Activated naive CD4-positive, alpha-beta T cell treated with anti-CD3 and anti-CD28 coated beads for 36 hours (primary cell): ENCODE measurements at regions of chr20 and their contacts with region 1.

Region 1: GRCh38 chr20:32031007-32031958 is 20.8 kb upstream of the HCK start:
- DNase-seq: peak; percentile 77
- H3K4me3 Mint-ChIP-seq: peak overlapping the region; percentile 12
- H3K27ac Mint-ChIP-seq: no peak overlapping the region
- H3K4me1 Mint-ChIP-seq: no peaks in the 10 kb centered on the region
- H3K27me3 Mint-ChIP-seq: peaks cover 6% of the 10 kb centered on the region

Region 2: GRCh38 chr20:31751126-31751525 is 280.2 kb before region 1 on chr20:
- CTCF ChIA-PET with region 1: no interaction called
- intact Hi-C with region 1: no loop called
- DNase-seq: no peak
- H3K4me3 Mint-ChIP-seq: no peak overlapping the region
- H3K27ac Mint-ChIP-seq: no peak overlapping the region
- H3K4me1 Mint-ChIP-seq: no peaks in the 10 kb centered on the region
- H3K27me3 Mint-ChIP-seq: no peaks in the 10 kb centered on the region

Region 3: DNA sequence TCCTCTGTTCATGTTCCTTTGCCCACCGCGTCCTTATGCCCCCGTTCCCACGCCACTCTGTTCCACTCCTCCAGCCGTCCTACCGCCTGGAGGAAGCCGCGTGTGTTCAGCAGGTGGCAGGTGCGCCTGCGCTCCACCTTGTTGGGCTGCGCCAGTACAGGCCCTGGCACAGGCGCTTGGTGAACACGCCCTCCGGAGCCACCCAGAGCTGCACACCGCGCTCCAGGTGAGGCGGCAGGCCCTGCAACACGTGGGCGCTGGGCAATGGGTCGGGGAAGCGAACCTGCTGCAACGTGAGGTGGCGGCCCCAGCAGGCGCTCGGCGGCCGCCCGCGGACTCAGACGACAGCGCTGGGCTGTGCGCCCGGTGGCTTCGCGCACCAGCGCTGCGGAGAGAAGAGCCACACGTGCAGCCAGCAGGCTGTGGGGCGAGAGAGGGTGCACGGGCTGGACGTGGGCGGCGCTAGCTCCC is 181.8 kb before region 1 on chr20:
- CTCF ChIA-PET with region 1: interaction called, 35 read pairs
- intact Hi-C with region 1: loop called (anchors 1 kb)
- DNase-seq: no peak
- H3K4me3 Mint-ChIP-seq: no peak overlapping the region
- H3K27ac Mint-ChIP-seq: no peak overlapping the region
- H3K4me1 Mint-ChIP-seq: no peaks in the 10 kb centered on the region
- H3K27me3 Mint-ChIP-seq: peaks cover 21% of the 10 kb centered on the region

Region 4: GRCh38 chr20:32012159-32012688 is 19.1 kb before region 1 on chr20:
- CTCF ChIA-PET with region 1: interaction called, 11 read pairs
- intact Hi-C with region 1: no loop called
- DNase-seq: no peak
- H3K4me3 Mint-ChIP-seq: no peak overlapping the region
- H3K27ac Mint-ChIP-seq: no peak overlapping the region
- H3K4me1 Mint-ChIP-seq: no peaks in the 10 kb centered on the region
- H3K27me3 Mint-ChIP-seq: peaks cover 19% of the 10 kb centered on the region

Region 5: GRCh38 chr20:32067234-32067821 is 36.0 kb after region 1 on chr20:
- CTCF ChIA-PET with region 1: no interaction called
- intact Hi-C with region 1: no loop called
- DNase-seq: no peak
- H3K4me3 Mint-ChIP-seq: no peak overlapping the region
- H3K27ac Mint-ChIP-seq: no peak overlapping the region
- H3K4me1 Mint-ChIP-seq: peaks cover 5% of the 10 kb centered on the region
- H3K27me3 Mint-ChIP-seq: peaks cover 5% of the 10 kb centered on the region

Region 6: DNA sequence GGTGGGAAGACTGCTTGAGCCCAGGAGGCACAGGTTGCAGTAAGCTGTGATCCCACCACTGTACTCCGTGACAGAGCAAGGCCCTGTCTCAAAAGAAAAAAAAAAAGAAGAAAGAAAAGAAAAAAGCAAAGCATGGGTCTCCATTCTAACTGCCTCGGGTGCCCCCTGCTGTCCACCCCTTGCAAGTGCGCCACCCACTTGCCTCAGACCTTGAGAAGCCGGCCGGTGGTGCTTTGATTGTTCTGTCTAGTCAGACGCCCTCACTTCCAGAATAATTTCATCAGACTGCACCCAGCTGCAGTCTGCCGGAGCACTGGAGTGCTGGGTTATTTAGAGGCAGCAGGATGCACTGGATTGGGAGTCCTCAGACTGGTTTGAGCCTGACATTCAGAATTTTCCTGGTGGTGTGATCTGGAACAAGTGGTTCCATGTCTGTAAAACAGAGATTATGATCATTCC is 60.6 kb after region 1 on chr20:
- CTCF ChIA-PET with region 1: interaction called, 34 read pairs
- intact Hi-C with region 1: loop called (anchors 1 kb)
- DNase-seq: peak; percentile 92
- H3K4me3 Mint-ChIP-seq: no peak overlapping the region
- H3K27ac Mint-ChIP-seq: no peak overlapping the region
- H3K4me1 Mint-ChIP-seq: no peaks in the 10 kb centered on the region
- H3K27me3 Mint-ChIP-seq: no peaks in the 10 kb centered on the region

Region 7: GRCh38 chr20:32168184-32168905 is 137.1 kb after region 1 on chr20:
- CTCF ChIA-PET with region 1: no interaction called
- intact Hi-C with region 1: no loop called
- DNase-seq: no peak
- H3K4me3 Mint-ChIP-seq: no peak overlapping the region
- H3K27ac Mint-ChIP-seq: no peak overlapping the region
- H3K4me1 Mint-ChIP-seq: no peaks in the 10 kb centered on the region
- H3K27me3 Mint-ChIP-seq: no peaks in the 10 kb centered on the region

Region 8: DNA sequence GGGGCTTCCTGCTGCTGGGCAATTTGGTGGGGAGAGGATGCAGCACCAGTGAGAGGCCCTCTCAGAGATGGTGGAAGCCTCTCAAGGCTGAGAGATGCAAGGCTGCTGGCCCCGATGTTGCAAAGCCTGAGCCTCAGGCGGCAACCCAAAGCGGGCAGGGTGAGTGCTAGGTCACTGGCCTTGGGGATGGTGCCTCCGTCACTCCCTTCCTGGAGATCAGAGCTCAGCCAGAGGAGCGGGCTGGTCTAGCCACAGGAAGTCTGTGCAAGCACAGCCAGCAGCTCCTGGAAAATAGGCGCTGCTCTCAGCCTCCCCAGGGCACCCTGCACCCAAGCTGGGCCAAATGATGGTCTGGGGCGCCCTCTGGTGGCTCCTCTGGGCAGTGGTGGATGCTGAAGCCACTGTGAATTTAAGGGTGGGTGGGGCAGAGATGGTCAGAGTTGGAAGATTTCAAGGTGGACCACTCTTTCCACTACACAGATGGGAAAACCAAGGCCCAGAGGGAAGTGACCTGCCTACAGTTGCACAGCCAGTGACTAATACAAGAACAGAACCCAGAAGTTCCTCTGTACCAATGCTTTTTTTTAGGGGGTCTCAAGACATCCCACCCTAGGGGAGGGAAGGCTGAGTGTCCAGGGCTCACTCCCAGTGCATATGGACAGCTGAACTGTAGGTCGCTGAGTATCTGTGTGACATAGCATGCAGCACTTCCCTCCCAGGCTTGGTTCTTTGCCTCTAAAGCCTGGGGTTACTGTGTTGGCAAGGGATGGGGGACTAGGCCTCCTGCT is 621.6 kb after region 1 on chr20:
- CTCF ChIA-PET with region 1: no interaction called
- intact Hi-C with region 1: loop called (anchors 2 kb)
- DNase-seq: peak; percentile 93
- H3K4me3 Mint-ChIP-seq: no peak overlapping the region
- H3K27ac Mint-ChIP-seq: no peak overlapping the region
- H3K4me1 Mint-ChIP-seq: peaks cover 8% of the 10 kb centered on the region
- H3K27me3 Mint-ChIP-seq: no peaks in the 10 kb centered on the region